Psoas muscle (tissue), 8 donors: ENCODE measurements at regions of chr14 and their contacts with region 1.

Region 1: GRCh38 chr14:68862954-68863594 is 70.2 kb upstream of the ZFP36L1 start:
- DNase-seq: peak; percentile 72 to 84
- ATAC-seq: peak in 3 of 4 donors; percentile 69 to 87 (median 75)
- H3K4me3 ChIP-seq: no peak overlapping the region
- H3K27ac ChIP-seq: no peak overlapping the region
- H3K4me1 ChIP-seq: no peaks in the 10 kb centered on the region
- H3K27me3 ChIP-seq: no peaks in the 10 kb centered on the region
- CTCF ChIP-seq: peak; percentile 72

Region 2: DNA sequence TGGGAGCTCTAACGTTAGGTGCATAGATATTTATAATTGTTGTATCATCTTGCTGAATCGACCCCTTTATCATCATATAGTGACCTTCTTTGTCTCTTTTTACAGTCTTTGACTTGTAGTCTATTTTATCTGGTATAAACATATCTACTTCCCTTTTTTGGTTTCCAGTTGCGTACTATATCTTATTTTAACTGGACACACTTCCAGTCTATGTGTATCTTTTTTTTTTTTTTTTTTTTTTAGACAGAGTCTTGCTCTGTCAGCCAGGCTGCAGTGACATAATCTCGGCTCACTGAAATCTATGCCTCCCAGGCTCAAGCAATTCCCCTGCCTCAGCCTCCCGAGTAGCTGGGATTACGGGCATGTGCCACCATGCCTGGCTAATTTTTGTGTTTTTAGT is 28.3 kb before region 1 on chr14:
- intact Hi-C with region 1: no loop called
- DNase-seq: no peak
- ATAC-seq: no peak
- H3K4me3 ChIP-seq: no peak overlapping the region
- H3K27ac ChIP-seq: no peak overlapping the region
- H3K4me1 ChIP-seq: no peaks in the 10 kb centered on the region
- H3K27me3 ChIP-seq: no peaks in the 10 kb centered on the region
- CTCF ChIP-seq: no peak

Region 3: GRCh38 chr14:69107407-69108003 is 244.4 kb after region 1 on chr14:
- intact Hi-C with region 1: loop called (anchors 1 to 5 kb)
- DNase-seq: no peak
- ATAC-seq: peak; percentile 62 to 86 (median 72)
- H3K4me3 ChIP-seq: no peak overlapping the region
- H3K27ac ChIP-seq: no peak overlapping the region
- H3K4me1 ChIP-seq: peaks cover 4% of the 10 kb centered on the region
- H3K27me3 ChIP-seq: no peaks in the 10 kb centered on the region
- CTCF ChIP-seq: peak; percentile 73